ENCODE measurements at regions of chr2 and their contacts with region 1.

Region 1: DNA sequence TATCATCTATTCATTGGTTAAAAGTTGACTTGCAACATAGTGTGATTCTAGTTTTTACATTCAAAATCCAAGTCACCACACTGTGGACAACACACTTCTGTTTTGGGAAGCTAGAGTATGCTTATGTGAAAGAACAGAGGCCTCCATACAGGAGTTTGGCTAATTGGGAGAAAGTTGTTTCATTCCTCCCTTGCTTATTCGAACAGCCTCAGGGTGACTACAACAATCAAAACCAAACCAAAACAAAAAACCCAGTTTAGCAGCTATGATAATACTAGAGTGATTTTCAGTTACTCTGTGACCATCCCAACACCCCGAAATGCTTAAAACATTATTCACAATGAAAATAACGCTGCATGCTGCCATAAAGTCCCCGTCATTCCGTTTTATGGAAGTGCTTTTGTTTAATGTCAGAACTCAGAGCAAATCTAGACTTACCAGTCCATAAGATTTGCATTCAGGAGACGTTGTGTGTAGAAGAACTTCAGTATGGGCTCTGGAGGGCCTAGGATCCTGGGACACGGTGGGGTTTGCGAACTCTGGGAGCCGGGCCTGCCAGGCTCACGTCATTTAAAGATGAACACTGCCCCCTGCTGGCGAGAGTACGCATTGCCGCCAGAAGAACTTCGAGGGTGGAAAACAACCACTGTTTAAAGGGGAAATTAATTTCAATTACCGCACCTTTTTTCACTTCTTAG is 111.4 kb downstream of the FTCDNL1 start:
- DNase-seq: peak in 1 of 2 donors; percentile 75
- H3K4me3 ChIP-seq: no peak overlapping the region
- H3K27ac ChIP-seq: no peak overlapping the region
- H3K4me1 ChIP-seq: peaks cover 2 to 4% of the 10 kb centered on the region in 2 donors
- H3K27me3 ChIP-seq: no peaks in the 10 kb centered on the region
- CTCF ChIP-seq: peak; percentile 58 to 88 (median 84)

Region 2: DNA sequence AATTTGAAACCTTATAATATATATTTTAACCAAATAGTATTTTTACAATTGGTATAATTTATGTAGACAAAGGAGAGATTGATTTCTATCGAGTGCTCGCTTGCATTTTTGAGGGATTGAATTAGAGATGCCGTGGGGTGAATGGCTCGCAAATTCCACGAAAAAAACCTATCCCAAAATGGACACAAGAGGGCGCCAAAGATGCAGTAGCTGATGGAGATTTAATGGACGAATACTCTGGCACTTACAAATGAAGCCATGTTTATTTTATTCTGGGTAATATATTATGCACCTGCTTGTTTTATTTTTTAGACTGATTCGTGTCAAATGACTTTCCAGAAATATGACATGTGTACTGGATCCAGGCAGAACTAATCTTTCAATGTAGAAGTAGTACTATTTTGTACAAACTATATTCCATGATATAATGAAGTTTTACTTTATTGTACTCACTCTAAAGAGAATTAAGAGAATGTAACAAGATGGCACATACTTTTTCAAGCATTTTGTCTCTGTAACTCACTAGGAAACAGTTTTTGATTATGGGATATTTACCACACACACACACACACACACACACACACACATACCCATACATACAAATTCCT is 1429.8 kb before region 1 on chr2:
- intact Hi-C with region 1: loop called (anchors 2 kb)
- DNase-seq: no peak
- H3K4me3 ChIP-seq: no peak overlapping the region
- H3K27ac ChIP-seq: no peak overlapping the region
- H3K4me1 ChIP-seq: no peaks in the 10 kb centered on the region
- H3K27me3 ChIP-seq: no peaks in the 10 kb centered on the region
- CTCF ChIP-seq: peak; percentile 23 to 82 (median 78)

Region 3: DNA sequence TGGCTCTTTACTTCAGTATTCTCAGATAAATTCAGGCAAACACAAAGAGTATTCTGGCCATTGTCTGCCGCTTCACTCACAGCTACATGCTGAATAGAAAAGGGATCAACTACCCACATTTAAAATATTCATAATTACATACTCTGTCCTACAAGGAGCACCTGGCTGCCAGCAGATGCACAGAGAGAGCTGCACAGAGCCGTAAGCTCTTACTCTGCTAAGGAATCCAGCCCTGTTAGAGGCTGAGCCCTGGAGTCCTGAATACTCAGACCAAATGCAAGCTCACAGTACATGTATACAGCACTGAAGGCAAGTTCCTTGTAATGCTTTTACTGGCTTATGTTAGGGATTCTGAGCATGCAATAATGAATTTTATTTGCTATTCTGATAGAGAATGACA is 31.2 kb after region 1 on chr2:
- intact Hi-C with region 1: no loop called
- DNase-seq: no peak
- H3K4me3 ChIP-seq: no peak overlapping the region
- H3K27ac ChIP-seq: no peak overlapping the region
- H3K4me1 ChIP-seq: no peaks in the 10 kb centered on the region
- H3K27me3 ChIP-seq: no peaks in the 10 kb centered on the region
- CTCF ChIP-seq: no peak

Measured in ascending aorta (tissue), 2 donors.